ENCODE measurements at regions of chr18 and their contacts with region 1.

Region 1: DNA sequence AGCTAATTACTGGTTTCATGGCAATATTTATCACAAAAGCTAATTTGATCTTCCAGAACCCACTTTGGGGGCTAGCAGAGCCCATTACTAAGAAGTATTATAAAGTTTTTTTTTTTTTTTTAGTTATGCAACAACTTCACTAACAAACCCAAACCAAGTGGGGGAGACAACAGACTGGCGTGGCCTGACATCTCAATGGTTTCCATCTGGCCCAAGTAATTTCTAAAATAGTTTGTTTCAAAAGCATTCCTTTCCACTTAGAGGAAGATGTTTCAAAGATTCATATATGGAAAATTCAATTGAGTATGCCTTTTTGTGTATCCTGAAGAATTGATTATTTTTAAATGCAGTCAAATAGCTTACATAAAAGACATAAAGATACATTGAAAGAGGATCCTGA is 367.1 kb downstream of the HRH4 start:
- DNase-seq: no peak
- ATAC-seq: no peak
- H3K4me3 ChIP-seq: no peak overlapping the region
- H3K27ac ChIP-seq: no peak overlapping the region
- H3K4me1 ChIP-seq: no peaks in the 10 kb centered on the region
- H3K27me3 ChIP-seq: peaks cover 0 to 5% (median 0%) of the 10 kb centered on the region in 9 donors
- CTCF ChIP-seq: no peak
- POLR2A ChIP-seq: no peak

Region 2: DNA sequence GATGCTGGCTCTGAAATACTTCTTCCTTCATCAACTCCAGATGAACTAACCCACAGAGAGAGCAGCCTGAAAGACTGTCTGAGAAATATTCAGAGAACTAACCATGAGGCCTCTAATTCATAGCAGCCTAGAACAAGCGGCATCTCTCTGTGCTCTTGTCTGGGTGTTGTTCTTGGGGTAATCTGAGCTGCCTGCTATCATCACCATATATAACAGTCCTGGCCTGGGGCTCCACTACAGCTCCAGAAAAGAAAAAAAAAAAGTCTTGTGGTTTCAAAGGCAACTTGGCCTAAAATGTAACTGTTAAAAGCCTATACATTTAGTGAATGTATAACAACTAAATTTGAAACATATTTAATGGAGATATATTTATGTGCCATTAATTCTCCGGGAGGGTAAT is 72.9 kb before region 1 on chr18:
- intact Hi-C with region 1: loop called in 1 of 10 experiments (anchors 10 kb)
- DNase-seq: no peak
- ATAC-seq: no peak
- H3K4me3 ChIP-seq: no peak overlapping the region
- H3K27ac ChIP-seq: no peak overlapping the region
- H3K4me1 ChIP-seq: no peaks in the 10 kb centered on the region
- H3K27me3 ChIP-seq: no peaks in the 10 kb centered on the region
- CTCF ChIP-seq: no peak
- POLR2A ChIP-seq: no peak

Region 3: GRCh38 chr18:24894880-24895279 is 67.4 kb after region 1 on chr18:
- intact Hi-C with region 1: no loop called
- DNase-seq: no peak
- ATAC-seq: no peak
- H3K4me3 ChIP-seq: no peak overlapping the region
- H3K27ac ChIP-seq: no peak overlapping the region
- H3K4me1 ChIP-seq: no peaks in the 10 kb centered on the region
- H3K27me3 ChIP-seq: no peaks in the 10 kb centered on the region
- CTCF ChIP-seq: no peak
- POLR2A ChIP-seq: no peak

Region 4: DNA sequence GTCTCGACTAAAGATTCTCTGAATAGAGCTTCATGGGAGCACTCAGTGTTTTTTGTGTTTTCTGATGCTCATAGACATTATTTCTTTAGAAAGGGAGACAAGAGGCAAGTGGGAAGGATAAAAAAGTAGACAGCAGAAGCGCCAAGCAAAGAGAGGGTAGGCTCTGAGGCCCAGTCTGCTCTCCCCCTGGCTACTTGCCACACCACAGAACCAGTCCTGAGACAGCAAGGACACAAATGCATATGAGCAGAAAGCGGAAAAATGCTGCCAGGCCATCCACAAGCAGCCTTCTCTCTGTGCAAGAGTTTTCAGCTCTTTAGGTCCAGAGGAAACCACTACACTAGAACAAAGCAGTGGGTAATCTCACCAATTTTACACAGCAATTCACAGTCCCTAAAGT is 239.0 kb after region 1 on chr18:
- intact Hi-C with region 1: no loop called
- DNase-seq: no peak
- ATAC-seq: no peak
- H3K4me3 ChIP-seq: no peak overlapping the region
- H3K27ac ChIP-seq: no peak overlapping the region
- H3K4me1 ChIP-seq: peaks cover 0 to 10% (median 0%) of the 10 kb centered on the region in 12 donors
- H3K27me3 ChIP-seq: no peaks in the 10 kb centered on the region
- CTCF ChIP-seq: no peak
- POLR2A ChIP-seq: no peak

Measured in heart left ventricle (tissue), 16 donors.